Activated T-helper 2 cell treated with anti-CD3 and anti-CD28 coated beads, Interferon-gamma antibody, Interleukin-2, Interleukin-4, amounts not matched to agents 10 μg/mL and 5 μg/mL and 100 μg/mL, durations not matched to agents 14 hours and 24 hours and 36 hours (primary cell): ENCODE measurements at regions of chr6 and their contacts with region 1.

Region 1: GRCh38 chr6:157021344-157021992 is 244.3 kb downstream of the ARID1B start:
- DNase-seq: peak; percentile 89
- H3K4me3 Mint-ChIP-seq: peak overlapping the region; percentile 94
- H3K27ac Mint-ChIP-seq: peak overlapping the region; percentile 99
- H3K4me1 Mint-ChIP-seq: peaks cover 46% of the 10 kb centered on the region
- H3K27me3 Mint-ChIP-seq: no peaks in the 10 kb centered on the region

Region 2: GRCh38 chr6:156564127-156564806 is 457.2 kb before region 1 on chr6:
- intact Hi-C with region 1: loop called (anchors 5 kb)
- DNase-seq: peak; percentile 61
- H3K4me3 Mint-ChIP-seq: no peak overlapping the region
- H3K27ac Mint-ChIP-seq: no peak overlapping the region
- H3K4me1 Mint-ChIP-seq: peaks cover 7% of the 10 kb centered on the region
- H3K27me3 Mint-ChIP-seq: peaks cover 5% of the 10 kb centered on the region

Region 3: GRCh38 chr6:156776840-156777576 is 244.5 kb before region 1 on chr6 and contains the start of gene ARID1B:
- intact Hi-C with region 1: loop called (anchors 1 kb)
- DNase-seq: peak; percentile 74
- H3K4me3 Mint-ChIP-seq: peak within 1 kb of the TSS; percentile 95
- H3K27ac Mint-ChIP-seq: peak within 1 kb of the TSS; percentile 97
- H3K4me1 Mint-ChIP-seq: peaks cover 33% of the 10 kb centered on the region
- H3K27me3 Mint-ChIP-seq: no peaks in the 10 kb centered on the region
- total RNA-seq, gene ARID1B: 65.6 and 66.3 TPM in 2 replicates

Region 4: DNA sequence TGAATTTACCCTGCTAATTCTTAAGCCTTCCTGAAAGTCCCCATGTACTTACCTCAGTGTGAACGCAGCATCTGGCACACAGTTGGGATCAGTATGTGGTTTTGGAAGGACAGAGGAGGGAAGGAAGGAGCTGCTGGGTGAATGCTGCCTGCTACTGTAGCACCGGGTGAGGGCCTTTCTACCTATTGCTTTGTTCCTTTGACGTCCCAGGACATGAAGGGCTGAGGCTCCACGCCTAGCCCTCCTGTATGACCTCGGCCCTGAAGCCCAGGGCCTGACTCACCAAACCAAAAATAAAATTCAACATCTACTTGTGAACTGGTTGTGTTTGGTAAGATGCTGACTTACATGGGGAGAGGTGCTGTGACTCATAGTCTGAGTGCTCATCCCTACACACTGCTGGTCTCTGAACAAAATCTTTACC is 193.2 kb before region 1 on chr6:
- intact Hi-C with region 1: no loop called
- DNase-seq: no peak
- H3K4me3 Mint-ChIP-seq: no peak overlapping the region
- H3K27ac Mint-ChIP-seq: peak overlapping the region; percentile 46
- H3K4me1 Mint-ChIP-seq: peaks cover 38% of the 10 kb centered on the region
- H3K27me3 Mint-ChIP-seq: no peaks in the 10 kb centered on the region

Region 5: DNA sequence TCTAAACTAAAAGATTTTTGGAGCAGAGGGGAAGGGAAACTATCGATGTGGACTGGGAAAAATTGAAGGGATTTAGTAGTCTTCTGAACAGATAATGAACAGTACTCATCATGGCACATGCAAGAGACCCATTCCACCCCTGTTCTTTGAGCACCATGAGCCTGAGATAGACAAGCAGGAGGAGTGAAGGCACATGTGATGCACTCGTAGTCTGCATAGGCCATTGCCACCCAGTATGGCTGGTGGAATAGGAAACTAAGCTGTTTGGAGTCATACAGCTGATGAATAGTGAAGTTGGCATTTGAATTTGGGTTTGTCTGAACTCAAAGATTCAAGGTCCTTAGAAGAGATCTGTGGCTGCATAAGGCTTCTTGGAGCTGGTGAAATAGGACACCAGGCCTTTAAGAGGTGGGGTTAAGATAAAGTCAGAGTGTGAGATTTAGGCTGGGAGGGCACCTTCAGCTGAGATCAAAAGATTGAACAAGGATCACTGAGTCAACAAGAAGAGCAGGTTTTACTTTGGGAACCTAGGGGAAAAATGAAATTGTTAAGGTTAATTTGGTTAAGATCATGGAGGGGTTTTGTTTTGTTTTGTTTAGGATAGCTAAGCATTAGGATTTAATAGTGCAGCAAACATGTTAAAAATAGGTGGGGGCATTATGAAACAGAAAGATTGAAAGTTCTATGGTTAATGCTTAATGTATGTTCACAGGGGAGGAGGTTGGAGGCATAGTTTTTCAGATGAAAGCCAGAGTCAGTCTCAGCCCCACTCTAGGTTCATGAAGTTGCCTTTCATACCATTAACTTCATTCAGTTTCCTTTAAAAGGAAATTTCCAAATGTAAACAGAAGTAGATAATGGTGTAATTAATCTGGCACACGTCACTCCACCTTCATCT is 95.5 kb before region 1 on chr6:
- intact Hi-C with region 1: loop called (anchors 2 kb)
- DNase-seq: no peak
- H3K4me3 Mint-ChIP-seq: no peak overlapping the region
- H3K27ac Mint-ChIP-seq: peak overlapping the region; percentile 47
- H3K4me1 Mint-ChIP-seq: peaks cover 33% of the 10 kb centered on the region
- H3K27me3 Mint-ChIP-seq: no peaks in the 10 kb centered on the region

Region 6: DNA sequence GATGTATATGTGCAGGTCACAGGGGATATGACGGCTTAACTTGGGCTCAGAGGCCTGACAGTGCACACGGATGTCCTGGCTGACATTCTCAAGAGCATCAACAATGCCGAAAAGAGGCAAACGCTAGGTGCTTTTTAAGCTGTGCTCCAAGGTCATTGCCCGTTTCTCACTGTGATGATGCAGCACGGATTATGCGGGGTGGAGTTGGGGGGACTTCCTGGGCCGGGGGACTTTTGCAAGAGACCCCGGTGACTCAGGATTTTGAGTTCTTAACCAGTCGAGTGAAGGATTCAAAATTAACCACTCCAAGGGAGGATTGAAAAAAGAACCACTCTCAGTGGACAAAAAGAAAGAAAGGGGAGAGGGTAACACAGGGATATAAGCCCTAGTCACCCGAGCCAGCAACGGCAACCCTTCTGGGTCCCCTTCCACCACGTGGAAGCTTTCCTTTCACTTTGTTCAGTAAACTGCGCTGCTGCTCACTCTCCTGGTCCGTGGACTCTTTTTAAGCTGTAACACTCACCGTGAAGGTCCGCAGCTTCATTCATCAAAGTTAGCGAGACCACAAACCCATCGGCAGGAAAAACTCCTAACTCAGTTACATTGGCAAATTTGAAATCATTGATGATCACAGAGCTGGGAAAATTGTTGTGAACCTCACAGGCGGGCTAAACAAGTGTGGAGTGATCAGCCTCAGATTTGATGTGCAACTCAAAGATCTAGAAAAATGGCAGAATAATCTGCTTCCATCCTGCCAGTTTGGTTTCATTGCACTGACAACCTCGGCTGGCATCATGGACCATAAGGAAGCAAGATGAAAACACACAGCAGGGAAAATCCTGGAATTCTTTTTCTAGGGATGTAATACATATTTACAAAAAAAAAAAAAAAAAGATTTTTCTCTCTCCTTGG is 45.0 kb before region 1 on chr6:
- intact Hi-C with region 1: loop called (anchors 1 kb)
- DNase-seq: no peak
- H3K4me3 Mint-ChIP-seq: peak overlapping the region; percentile 74
- H3K27ac Mint-ChIP-seq: peak overlapping the region; percentile 83
- H3K4me1 Mint-ChIP-seq: peaks cover 50% of the 10 kb centered on the region
- H3K27me3 Mint-ChIP-seq: no peaks in the 10 kb centered on the region

Region 7: DNA sequence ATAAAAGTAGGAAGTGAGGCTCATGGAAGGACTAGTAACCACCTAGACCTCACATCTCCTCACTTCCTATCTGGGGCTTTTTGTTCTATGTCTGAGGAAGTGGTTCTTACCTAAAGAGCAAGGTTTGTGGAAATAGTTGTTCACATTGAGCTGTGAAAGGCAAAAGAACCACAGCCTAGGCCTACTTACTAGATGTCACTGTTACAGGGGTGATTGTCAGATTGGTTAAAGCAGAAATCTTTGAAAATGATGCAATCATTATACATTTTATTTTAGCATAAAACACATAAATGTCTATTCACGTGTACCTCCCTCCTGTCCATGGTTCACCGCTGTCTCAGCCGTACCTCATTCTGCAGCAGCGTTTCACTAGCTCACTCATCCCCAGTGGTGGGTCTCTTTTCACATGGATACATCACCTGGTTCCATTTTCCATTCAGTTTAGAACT is 33.1 kb after region 1 on chr6:
- intact Hi-C with region 1: loop called (anchors 2 kb)
- DNase-seq: no peak
- H3K4me3 Mint-ChIP-seq: peak overlapping the region; percentile 33
- H3K27ac Mint-ChIP-seq: peak overlapping the region; percentile 81
- H3K4me1 Mint-ChIP-seq: peaks cover 34% of the 10 kb centered on the region
- H3K27me3 Mint-ChIP-seq: no peaks in the 10 kb centered on the region